ENCODE measurements at regions of chr7 and their contacts with region 1.

Region 1: DNA sequence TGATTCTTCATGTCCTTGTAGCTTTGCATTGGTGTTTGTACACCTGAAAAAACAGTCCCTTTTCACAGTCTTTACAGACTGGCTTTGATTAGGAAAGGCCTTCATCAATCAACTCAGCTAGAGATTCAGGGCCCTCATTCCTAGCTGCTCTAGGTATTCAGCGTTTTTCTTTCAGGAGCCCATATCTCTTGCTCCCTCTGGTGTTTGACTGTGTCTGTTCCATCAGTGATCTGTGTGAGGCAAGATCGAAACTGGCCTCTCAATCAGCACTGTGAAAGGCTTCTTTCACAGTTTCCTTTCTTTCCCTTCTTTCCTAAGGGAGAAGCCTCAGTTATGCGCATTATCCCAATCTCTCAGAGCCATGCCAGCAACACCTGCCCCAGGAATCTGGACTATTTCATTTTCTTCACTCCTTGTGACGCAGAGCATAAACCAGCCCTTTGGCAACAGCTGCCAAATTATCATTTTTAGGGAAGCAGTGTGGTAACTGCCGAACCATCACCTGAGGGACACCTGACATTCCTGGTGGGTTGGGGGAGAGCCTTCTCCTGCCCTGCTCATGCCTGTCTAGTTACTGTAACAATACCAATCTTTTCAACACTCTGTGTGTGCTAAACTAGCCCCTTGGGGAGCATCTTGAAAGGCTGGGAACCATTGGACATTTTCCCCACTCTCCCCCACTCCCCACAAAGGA is 75.7 kb upstream of the CCDC71L start:
- DNase-seq: peak; percentile 62
- H3K4me3 Mint-ChIP-seq: peak overlapping the region; percentile 40
- H3K27ac Mint-ChIP-seq: peak overlapping the region; percentile 48
- H3K4me1 Mint-ChIP-seq: peaks cover 16% of the 10 kb centered on the region
- H3K27me3 Mint-ChIP-seq: no peaks in the 10 kb centered on the region
- CTCF ChIP-seq: peak; percentile 30

Region 2: GRCh38 chr7:106542550-106543220 is 194.0 kb before region 1 on chr7:
- CTCF ChIA-PET with region 1: interaction called, 61 read pairs
- intact Hi-C with region 1: loop called (anchors 1 kb)
- DNase-seq: peak; percentile 79
- H3K4me3 Mint-ChIP-seq: no peak overlapping the region
- H3K27ac Mint-ChIP-seq: peak overlapping the region; percentile 40
- H3K4me1 Mint-ChIP-seq: peaks cover 19% of the 10 kb centered on the region
- H3K27me3 Mint-ChIP-seq: no peaks in the 10 kb centered on the region
- CTCF ChIP-seq: peak; percentile 60

Region 3: GRCh38 chr7:106747804-106748203 is 11.1 kb after region 1 on chr7:
- CTCF ChIA-PET with region 1: no interaction called
- intact Hi-C with region 1: no loop called
- DNase-seq: no peak
- H3K4me3 Mint-ChIP-seq: no peak overlapping the region
- H3K27ac Mint-ChIP-seq: no peak overlapping the region
- H3K4me1 Mint-ChIP-seq: peaks cover 9% of the 10 kb centered on the region
- H3K27me3 Mint-ChIP-seq: no peaks in the 10 kb centered on the region
- CTCF ChIP-seq: no peak

Region 4: GRCh38 chr7:106779877-106780276 is 43.2 kb after region 1 on chr7:
- CTCF ChIA-PET with region 1: interaction called, 7 read pairs
- intact Hi-C with region 1: loop called (anchors 2 kb)
- DNase-seq: peak; percentile 78
- H3K4me3 Mint-ChIP-seq: peak overlapping the region; percentile 42
- H3K27ac Mint-ChIP-seq: peak overlapping the region; percentile 96
- H3K4me1 Mint-ChIP-seq: peaks cover 60% of the 10 kb centered on the region
- H3K27me3 Mint-ChIP-seq: no peaks in the 10 kb centered on the region
- CTCF ChIP-seq: peak; percentile 39

Region 5: GRCh38 chr7:106812027-106812643 is 75.5 kb after region 1 on chr7:
- CTCF ChIA-PET with region 1: no interaction called
- intact Hi-C with region 1: no loop called
- DNase-seq: no peak
- H3K4me3 Mint-ChIP-seq: no peak overlapping the region
- H3K27ac Mint-ChIP-seq: no peak overlapping the region
- H3K4me1 Mint-ChIP-seq: peaks cover 8% of the 10 kb centered on the region
- H3K27me3 Mint-ChIP-seq: no peaks in the 10 kb centered on the region
- CTCF ChIP-seq: no peak

Region 6: DNA sequence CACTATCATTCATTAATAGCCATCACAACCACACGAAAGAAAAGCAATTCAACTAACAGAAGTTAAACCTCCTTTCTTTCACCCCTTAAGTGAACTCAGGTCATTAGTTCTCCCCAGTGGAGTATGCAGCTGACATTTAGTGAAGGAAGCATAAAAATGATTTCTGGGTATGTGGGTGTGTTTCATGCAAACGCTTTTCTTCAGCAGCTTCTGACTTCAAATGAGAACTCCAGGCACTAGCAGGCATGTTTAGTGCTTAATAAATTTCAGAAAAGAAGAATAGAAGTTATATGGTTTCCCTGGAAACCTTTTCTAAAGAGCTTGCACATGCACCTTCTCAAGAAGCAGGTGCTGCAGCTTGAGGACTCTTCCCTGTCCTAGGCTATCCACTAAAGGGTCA is 190.9 kb after region 1 on chr7:
- CTCF ChIA-PET with region 1: no interaction called
- intact Hi-C with region 1: no loop called
- DNase-seq: no peak
- H3K4me3 Mint-ChIP-seq: no peak overlapping the region
- H3K27ac Mint-ChIP-seq: no peak overlapping the region
- H3K4me1 Mint-ChIP-seq: no peaks in the 10 kb centered on the region
- H3K27me3 Mint-ChIP-seq: no peaks in the 10 kb centered on the region
- CTCF ChIP-seq: no peak